ENCODE measurements at regions of chr10 and their contacts with region 1.

Region 1: DNA sequence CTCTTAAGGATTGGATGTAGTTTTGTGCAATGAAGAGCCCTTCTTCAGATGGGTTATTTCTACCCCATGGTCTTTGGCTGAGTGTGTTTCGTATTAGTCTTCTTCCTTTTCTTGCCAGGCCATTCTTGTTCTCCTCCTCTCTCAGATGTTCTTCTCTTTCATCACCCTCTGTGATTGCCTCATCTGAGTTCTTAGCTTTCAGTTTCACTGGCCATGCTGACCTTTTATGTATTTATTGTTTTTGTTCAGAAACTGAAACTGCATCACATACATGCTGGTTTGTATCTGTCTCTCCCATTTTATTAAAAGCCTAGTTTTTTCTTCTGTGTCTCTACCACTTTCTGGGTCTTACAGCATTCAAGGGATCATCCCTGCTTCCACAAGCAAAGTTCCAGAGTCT is 21.7 kb upstream of the PCGF5 start:
- DNase-seq: peak in 2 of 9 experiments; percentile 52 to 72
- ATAC-seq: peak; percentile 47
- H3K4me3 ChIP-seq: no peak overlapping the region
- H3K4me3 Mint-ChIP-seq: peak overlapping the region; percentile 13
- H3K27ac ChIP-seq: peak overlapping the region in 1 of 2 experiments; percentile 88
- H3K27ac Mint-ChIP-seq: peak overlapping the region; percentile 71
- H3K4me1 ChIP-seq: peaks cover 65% of the 10 kb centered on the region
- H3K4me1 Mint-ChIP-seq: peaks cover 84% of the 10 kb centered on the region
- H3K27me3 ChIP-seq: no peaks in the 10 kb centered on the region
- H3K27me3 Mint-ChIP-seq: no peaks in the 10 kb centered on the region
- CTCF ChIP-seq: no peak

Region 2: DNA sequence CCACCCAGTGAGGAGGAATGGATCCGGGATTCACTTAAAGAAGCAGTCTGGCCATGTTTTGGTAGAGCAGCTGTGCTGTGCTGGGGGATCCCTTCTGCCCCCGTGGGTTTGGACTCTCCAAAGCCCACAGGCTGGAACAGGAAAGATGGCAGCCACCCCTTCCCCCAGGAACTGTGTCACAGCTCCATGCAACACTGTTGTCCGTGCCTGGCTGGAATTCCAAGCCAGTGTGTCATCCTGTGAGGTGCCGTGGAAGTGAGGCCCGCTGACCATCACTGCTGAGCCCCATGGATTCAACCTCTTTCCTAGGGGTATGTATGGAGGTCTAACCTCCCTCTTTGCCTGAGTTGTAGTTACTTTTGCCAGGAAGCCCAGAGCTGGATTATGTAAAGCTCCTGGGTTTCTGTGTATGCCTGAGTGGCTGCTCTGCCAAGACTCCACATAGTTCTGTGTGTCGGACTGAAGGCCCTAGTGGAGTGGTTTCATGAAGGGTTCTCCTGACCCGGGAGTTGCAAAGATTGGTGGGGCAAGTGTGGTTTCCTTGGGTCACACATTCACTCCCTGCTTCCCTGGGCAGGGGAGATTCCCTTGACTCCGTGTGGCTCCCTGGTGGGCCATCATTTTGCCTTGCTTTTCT is 13.4 kb before region 1 on chr10:
- CTCF ChIA-PET with region 1: interaction called, 4 read pairs
- POLR2A ChIA-PET with region 1: interaction called, 8 read pairs
- intact Hi-C with region 1: loop called in 1 of 2 experiments (anchors 2 kb)
- DNase-seq: no peak
- ATAC-seq: no peak
- H3K4me3 ChIP-seq: no peak overlapping the region
- H3K4me3 Mint-ChIP-seq: no peak overlapping the region
- H3K27ac ChIP-seq: no peak overlapping the region
- H3K27ac Mint-ChIP-seq: peak overlapping the region; percentile 16
- H3K4me1 ChIP-seq: peaks cover 32% of the 10 kb centered on the region
- H3K4me1 Mint-ChIP-seq: peaks cover 88% of the 10 kb centered on the region
- H3K27me3 ChIP-seq: no peaks in the 10 kb centered on the region
- H3K27me3 Mint-ChIP-seq: no peaks in the 10 kb centered on the region
- CTCF ChIP-seq: no peak

Region 3: DNA sequence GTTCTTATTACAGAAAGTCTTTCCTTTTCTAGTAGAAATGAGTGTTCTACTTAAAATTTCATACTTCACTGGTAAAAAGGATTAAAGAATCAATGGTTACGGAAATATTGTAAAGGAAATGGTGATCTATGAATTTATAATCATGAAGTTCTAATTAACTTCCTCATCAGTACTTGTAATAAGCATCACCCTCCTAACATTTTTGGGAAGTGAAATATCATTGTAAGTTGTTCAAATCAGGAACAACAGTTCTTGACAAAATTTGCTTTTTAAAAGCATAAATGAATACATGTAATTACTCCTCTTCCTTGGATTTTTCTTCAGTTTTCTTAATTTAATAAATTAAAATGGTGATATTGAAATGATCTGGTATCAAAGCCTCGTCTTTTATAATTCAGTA is 16.1 kb after region 1 on chr10:
- CTCF ChIA-PET with region 1: no interaction called
- POLR2A ChIA-PET with region 1: interaction called, 3 read pairs
- intact Hi-C with region 1: loop called (anchors 2 kb)
- DNase-seq: no peak
- ATAC-seq: no peak
- H3K4me3 ChIP-seq: no peak overlapping the region
- H3K4me3 Mint-ChIP-seq: no peak overlapping the region
- H3K27ac ChIP-seq: no peak overlapping the region
- H3K27ac Mint-ChIP-seq: no peak overlapping the region
- H3K4me1 ChIP-seq: peaks cover 12% of the 10 kb centered on the region
- H3K4me1 Mint-ChIP-seq: peaks cover 43% of the 10 kb centered on the region
- H3K27me3 ChIP-seq: no peaks in the 10 kb centered on the region
- H3K27me3 Mint-ChIP-seq: no peaks in the 10 kb centered on the region
- CTCF ChIP-seq: no peak